ENCODE measurements at regions of chr2 and their contacts with region 1.

Region 1: GRCh38 chr2:79855264-79856006 is 342.6 kb downstream of the CTNNA2 start:
- DNase-seq: peak in 8 of 10 donors; percentile 11 to 67 (median 55)
- H3K4me3 ChIP-seq: peak overlapping the region in 35 of 59 donors; percentile 6 to 56 (median 34)
- H3K27ac ChIP-seq: peak overlapping the region in 15 of 59 donors; percentile 0 to 73 (median 30)
- H3K27me3 ChIP-seq: no peaks in the 10 kb centered on the region
- CTCF ChIP-seq: peak in 55 of 56 donors; percentile 17 to 76 (median 60)

Region 2: GRCh38 chr2:79369127-79369526 is 486.3 kb before region 1 on chr2:
- intact Hi-C with region 1: loop called in 1 of 2 experiments (anchors 10 kb)
- DNase-seq: peak; percentile 9 to 86 (median 64)
- H3K4me3 ChIP-seq: peak overlapping the region in 10 of 59 donors; percentile 7 to 41 (median 24)
- H3K27ac ChIP-seq: peak overlapping the region in 44 of 59 donors; percentile 4 to 81 (median 55)
- H3K27me3 ChIP-seq: no peaks in the 10 kb centered on the region
- CTCF ChIP-seq: peak in 31 of 56 donors; percentile 9 to 55 (median 27)

Region 3: DNA sequence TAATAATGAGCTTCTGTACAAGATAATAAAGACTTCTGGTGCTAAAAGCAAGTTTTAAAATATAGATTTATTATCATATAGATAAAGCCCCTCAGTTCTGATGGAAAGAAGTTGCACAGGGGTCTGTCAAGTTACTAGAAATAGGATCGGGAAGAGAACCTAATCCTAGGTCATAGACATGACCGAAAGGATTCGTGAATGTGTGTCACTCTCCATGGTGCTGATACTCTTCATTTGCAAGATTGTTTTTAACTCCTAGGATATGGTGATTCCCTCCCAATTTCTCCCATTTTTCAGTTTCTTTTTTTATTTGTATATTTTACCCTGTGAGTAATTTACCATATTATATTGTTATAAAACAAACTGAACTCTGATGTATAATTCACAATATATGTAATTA is 401.5 kb before region 1 on chr2:
- intact Hi-C with region 1: no loop called
- DNase-seq: no peak
- H3K4me3 ChIP-seq: no peak overlapping the region
- H3K27ac ChIP-seq: no peak overlapping the region
- H3K27me3 ChIP-seq: no peaks in the 10 kb centered on the region
- CTCF ChIP-seq: no peak

Region 4: DNA sequence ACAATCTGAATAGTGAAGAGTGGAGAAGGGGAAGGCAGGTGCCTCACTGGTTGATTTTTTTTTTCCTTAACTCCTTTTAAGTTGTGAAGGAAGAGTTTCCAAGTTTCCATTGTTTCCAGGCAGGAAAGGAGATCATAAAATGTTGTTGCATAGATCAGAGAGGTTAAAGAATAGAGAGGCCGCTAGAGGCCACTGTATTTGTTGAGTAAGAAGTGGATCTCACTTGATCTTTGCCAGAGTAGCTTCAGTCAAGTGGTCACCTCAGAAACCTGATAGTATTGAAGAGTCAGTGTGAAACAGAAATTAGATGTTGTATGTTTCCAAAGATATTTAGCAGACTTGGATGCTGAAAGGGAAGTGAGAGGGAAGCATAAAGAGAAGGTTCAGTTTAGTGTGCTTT is 325.0 kb before region 1 on chr2:
- intact Hi-C with region 1: loop called in 1 of 2 experiments (anchors 5 kb)
- DNase-seq: no peak
- H3K4me3 ChIP-seq: no peak overlapping the region
- H3K27ac ChIP-seq: no peak overlapping the region
- H3K27me3 ChIP-seq: no peaks in the 10 kb centered on the region
- CTCF ChIP-seq: peak in 27 of 56 donors; percentile 8 to 43 (median 24)

Region 5: DNA sequence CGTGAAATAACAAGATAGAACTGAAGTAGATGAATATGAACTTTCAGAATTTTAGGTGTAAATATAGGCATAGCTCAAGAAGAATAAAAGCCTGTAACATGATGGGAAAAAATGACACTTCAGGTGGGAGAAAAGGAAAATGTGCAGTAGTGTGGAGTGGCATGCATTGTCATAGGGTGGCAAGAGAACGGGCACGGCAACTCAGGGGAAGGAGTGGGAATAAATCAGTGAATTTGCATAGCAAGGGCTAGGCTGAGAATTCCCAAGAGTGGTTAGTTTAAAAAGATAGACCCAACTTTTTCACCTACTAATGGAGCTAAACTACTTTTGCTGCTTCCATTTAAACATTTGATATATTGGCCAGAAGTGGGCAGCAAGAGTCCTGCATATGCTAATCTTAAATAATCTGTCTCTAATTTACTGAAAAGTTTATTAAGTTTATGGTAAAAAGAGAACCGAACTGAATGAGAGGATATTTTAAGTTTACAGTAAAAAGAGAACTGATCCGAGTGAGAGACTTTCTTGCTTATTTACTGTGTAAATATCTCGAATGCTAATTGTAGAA is 114.5 kb before region 1 on chr2:
- intact Hi-C with region 1: loop called in 1 of 2 experiments (anchors 5 kb)
- DNase-seq: no peak
- H3K4me3 ChIP-seq: peak overlapping the region in 1 of 59 donors; percentile 2
- H3K27ac ChIP-seq: no peak overlapping the region
- H3K27me3 ChIP-seq: no peaks in the 10 kb centered on the region
- CTCF ChIP-seq: peak in 30 of 56 donors; percentile 12 to 60 (median 28)

Region 6: DNA sequence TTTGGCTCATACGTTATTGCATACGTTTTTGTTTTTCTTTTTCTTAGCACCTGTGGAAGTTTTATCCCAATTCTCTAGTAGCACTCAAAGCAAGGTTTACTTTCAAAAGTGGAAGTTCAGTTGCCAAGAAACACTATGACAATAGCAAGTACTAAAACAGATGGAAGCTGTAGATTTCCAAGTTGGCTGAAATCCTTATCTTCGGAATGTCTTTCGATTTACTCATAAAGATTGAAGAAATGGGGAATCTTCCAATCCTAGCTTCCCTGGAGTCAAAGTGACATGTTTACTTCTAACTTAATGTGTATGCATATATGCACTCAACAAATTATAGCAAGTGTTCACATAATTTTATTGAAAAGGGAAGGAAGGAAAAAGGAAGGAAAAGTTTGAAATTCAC is 35.2 kb before region 1 on chr2:
- intact Hi-C with region 1: no loop called
- DNase-seq: no peak
- H3K4me3 ChIP-seq: no peak overlapping the region
- H3K27ac ChIP-seq: no peak overlapping the region
- H3K27me3 ChIP-seq: no peaks in the 10 kb centered on the region
- CTCF ChIP-seq: no peak

Region 7: DNA sequence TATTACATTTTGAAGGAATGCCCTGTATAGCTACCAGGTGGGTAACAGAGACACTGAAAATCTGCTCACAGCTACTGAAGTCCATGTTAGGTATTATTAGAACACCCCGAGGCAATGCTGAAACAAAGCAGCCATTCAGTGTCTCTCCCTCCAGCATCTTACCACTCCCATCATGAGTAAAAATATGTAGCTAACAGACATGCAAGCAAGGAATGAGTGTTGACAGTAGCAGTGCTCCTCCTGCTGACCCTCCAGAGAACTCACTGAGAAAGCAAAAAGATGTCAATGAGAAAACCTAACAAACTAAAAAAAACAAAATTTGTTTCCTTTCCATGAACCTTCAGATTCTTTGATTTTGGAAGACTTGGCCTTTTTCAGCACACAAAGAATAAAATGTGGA is 55.2 kb after region 1 on chr2:
- intact Hi-C with region 1: no loop called
- DNase-seq: no peak
- H3K4me3 ChIP-seq: peak overlapping the region in 30 of 59 donors; percentile 1 to 60 (median 35)
- H3K27ac ChIP-seq: peak overlapping the region in 7 of 59 donors; percentile 10 to 42 (median 27)
- H3K27me3 ChIP-seq: no peaks in the 10 kb centered on the region
- CTCF ChIP-seq: peak in 15 of 56 donors; percentile 9 to 23 (median 14)

Region 8: GRCh38 chr2:80042635-80043034 is 187.2 kb after region 1 on chr2:
- intact Hi-C with region 1: no loop called
- DNase-seq: no peak
- H3K4me3 ChIP-seq: no peak overlapping the region
- H3K27ac ChIP-seq: no peak overlapping the region
- H3K27me3 ChIP-seq: no peaks in the 10 kb centered on the region
- CTCF ChIP-seq: no peak

Measured in dorsolateral prefrontal cortex (tissue), 120 donors.